PC-3 (cell line): ENCODE measurements at regions of chr20 and their contacts with region 1.

Region 1: DNA sequence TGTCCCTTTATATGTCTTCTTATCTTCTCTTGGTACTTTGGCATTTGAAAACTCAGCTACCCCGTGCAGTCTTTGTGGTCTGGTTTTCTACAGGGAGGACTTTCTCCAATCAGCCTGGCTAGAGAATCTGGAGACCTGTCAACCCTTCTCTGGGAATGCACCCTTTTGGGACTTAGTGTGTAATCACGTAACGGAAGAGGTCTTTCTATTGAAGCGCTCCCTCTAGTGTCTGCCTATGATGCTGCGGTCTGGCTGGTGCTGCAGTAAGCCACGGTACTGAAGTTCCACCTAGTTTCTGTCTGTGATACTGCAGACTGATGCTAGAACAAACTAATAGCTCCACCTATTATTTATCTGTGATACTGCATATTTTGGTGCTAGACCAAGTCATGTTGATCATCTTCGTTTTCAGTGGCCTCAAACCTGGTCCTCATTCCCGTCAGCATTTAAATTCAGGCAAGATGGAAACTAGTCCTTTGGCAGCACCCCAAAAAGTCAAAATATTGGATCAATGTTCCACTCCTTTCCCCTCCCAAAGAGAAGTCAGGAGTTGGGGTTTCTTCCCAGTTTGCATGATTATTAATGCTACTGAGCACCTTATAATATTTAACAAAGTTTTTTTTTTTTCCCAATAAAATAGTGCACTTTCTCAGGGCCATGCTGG is 12.5 kb upstream of the SIRPB2 start:
- DNase-seq: peak; percentile 98
- ATAC-seq: peak; percentile 85
- H3K4me3 ChIP-seq: no peak overlapping the region
- H3K27ac ChIP-seq: peak overlapping the region; percentile 85; the same call in 1 of the 2 replicates
- H3K4me1 ChIP-seq: peaks cover 50% of the 10 kb centered on the region
- H3K27me3 ChIP-seq: no peaks in the 10 kb centered on the region
- CTCF ChIP-seq: peak; percentile 100

Region 2: GRCh38 chr20:1212607-1213396 is 290.9 kb before region 1 on chr20:
- CTCF ChIA-PET with region 1: interaction called, 3 read pairs
- POLR2A ChIA-PET with region 1: no interaction called
- intact Hi-C with region 1: loop called (anchors 1 kb)
- DNase-seq: peak; percentile 87
- ATAC-seq: peak; percentile 95
- H3K4me3 ChIP-seq: no peak overlapping the region
- H3K27ac ChIP-seq: no peak overlapping the region
- H3K4me1 ChIP-seq: 0 out of 2 replicates have a peak, but pooled peaks cover 3% of the 10 kb centered on the region
- H3K27me3 ChIP-seq: no peaks in the 10 kb centered on the region
- CTCF ChIP-seq: peak; percentile 91

Region 3: GRCh38 chr20:1466211-1467081 is 37.2 kb before region 1 on chr20 and contains the start of gene NSFL1C:
- CTCF ChIA-PET with region 1: interaction called, 44 read pairs
- POLR2A ChIA-PET with region 1: no interaction called
- intact Hi-C with region 1: loop called (anchors 1 kb)
- DNase-seq: peak; percentile 99
- ATAC-seq: peak; percentile 77
- H3K4me3 ChIP-seq: peak within 1 kb of the TSS; percentile 77
- H3K27ac ChIP-seq: peak within 1 kb of the TSS; percentile 85
- H3K4me1 ChIP-seq: peaks cover 49% of the 10 kb centered on the region
- H3K27me3 ChIP-seq: no peaks in the 10 kb centered on the region
- CTCF ChIP-seq: peak; percentile 91
- total RNA-seq, gene NSFL1C: 170 and 217 TPM in 2 replicates

Region 4: DNA sequence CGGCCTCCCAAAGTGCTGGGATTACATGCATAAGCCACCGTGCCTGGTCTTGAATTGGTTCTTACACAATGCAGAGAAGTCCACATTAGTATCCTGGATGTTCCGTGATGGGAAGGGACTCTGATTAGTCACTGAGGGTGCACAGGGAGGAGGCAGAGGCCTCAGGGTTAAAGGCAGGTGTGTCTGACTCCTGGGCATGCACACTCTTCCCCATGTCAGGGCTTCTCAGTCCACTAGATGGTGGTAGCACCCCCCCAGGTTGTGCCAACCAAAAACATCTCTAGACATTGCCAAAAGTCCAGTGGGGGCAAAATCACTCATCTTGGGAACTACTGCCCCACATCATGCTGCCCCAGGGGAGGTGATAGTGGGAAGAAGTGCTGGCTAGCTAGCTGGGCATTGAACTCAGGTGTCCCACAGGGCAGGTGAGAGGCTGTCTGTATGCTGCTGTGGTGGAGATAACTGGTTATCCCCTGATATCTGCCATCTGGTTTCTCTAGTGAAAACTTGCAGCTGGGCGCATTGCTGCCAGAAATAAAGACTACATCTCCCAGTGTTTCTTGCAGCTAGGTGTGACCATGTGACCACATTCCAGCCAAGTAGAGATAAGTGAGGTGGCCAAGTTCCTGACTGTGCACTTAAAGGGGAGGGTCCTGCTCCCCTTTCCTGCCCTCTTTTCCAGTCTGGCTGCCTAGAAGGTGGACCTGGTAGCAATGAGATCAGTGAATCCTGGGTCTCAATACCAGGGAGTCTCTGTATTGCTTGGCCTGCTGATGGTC is 28.7 kb before region 1 on chr20:
- CTCF ChIA-PET with region 1: interaction called, 44 read pairs
- POLR2A ChIA-PET with region 1: no interaction called
- intact Hi-C with region 1: loop called (anchors 1 kb)
- DNase-seq: peak; percentile 90
- ATAC-seq: peak; percentile 43
- H3K4me3 ChIP-seq: no peak overlapping the region
- H3K27ac ChIP-seq: peak overlapping the region; percentile 8; the same call in 1 of the 2 replicates
- H3K4me1 ChIP-seq: peaks cover 60% of the 10 kb centered on the region
- H3K27me3 ChIP-seq: no peaks in the 10 kb centered on the region
- CTCF ChIP-seq: peak; percentile 82

Region 5: DNA sequence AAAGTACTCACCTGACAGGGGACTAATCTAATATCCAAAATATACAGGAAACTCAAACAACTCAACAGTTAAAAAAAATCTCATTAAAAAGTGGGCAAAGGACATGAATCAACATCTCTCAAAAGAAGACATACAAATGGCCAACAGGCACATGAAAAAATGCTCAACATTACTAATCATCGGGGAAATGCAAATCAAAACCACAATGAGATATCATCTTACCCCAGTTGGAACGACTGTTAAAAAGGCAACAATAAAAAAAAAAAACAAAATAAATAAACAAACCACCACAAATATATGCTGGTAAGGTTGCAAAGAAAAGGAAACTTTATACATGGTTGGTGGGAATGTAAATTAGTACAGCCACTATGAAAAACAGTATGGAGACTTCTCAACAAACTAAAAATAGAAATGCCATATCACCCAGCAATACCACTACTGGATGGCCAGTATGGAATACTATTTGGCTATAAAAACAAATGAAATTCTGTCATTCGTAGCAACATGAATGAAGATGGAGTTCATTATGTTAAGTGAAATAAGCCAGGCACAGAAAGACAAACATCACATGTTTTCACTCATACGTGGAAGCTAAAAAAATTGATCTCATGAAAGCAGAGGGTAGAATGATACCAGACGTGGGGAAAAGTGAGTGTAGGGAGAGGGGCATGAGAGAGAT is 19.1 kb before region 1 on chr20:
- CTCF ChIA-PET with region 1: interaction called, 7 read pairs
- POLR2A ChIA-PET with region 1: no interaction called
- intact Hi-C with region 1: loop called (anchors 1 kb)
- DNase-seq: peak; percentile 87
- ATAC-seq: peak; percentile 88
- H3K4me3 ChIP-seq: no peak overlapping the region
- H3K27ac ChIP-seq: peak overlapping the region; percentile 39
- H3K4me1 ChIP-seq: peaks cover 33% of the 10 kb centered on the region
- H3K27me3 ChIP-seq: no peaks in the 10 kb centered on the region
- CTCF ChIP-seq: no peak

Region 6: DNA sequence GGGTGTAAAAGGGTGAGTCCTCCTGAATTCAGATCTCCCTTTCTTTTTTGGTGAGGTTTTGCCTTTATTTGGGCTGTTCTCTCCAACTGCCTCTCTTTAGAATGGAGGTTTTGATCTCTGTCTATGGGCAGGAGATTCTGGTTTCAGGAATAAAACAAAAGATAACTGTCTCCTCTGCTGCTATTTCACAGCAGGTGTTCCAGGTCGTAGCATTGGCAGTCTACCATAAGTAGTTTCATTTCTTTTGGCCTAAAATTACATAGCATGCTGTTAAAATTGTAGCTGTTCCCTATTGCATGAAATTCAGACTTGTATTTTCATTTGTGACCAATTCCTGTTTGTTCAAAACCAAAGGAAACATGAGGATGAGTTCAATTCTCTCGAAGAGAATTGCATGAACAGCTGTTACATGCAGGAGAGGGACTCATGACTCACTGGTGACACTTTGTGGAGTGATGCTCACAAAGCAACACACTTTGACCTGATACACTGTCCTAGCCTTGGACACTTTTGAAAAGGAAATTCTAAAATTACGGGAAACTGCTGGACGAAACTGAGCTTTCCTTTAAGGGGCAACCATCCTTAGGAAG is 230.7 kb after region 1 on chr20:
- CTCF ChIA-PET with region 1: interaction called, 27 read pairs
- POLR2A ChIA-PET with region 1: no interaction called
- intact Hi-C with region 1: no loop called
- DNase-seq: peak; percentile 79
- ATAC-seq: peak; percentile 97
- H3K4me3 ChIP-seq: no peak overlapping the region
- H3K27ac ChIP-seq: peak overlapping the region; percentile 62
- H3K4me1 ChIP-seq: peaks cover 19% of the 10 kb centered on the region
- H3K27me3 ChIP-seq: no peaks in the 10 kb centered on the region
- CTCF ChIP-seq: peak; percentile 84

Region 7: GRCh38 chr20:1860446-1860845 is 356.8 kb after region 1 on chr20:
- CTCF ChIA-PET with region 1: no interaction called
- POLR2A ChIA-PET with region 1: no interaction called
- intact Hi-C with region 1: no loop called
- DNase-seq: peak; percentile 13
- ATAC-seq: no peak
- H3K4me3 ChIP-seq: no peak overlapping the region
- H3K27ac ChIP-seq: no peak overlapping the region
- H3K4me1 ChIP-seq: no peaks in the 10 kb centered on the region
- H3K27me3 ChIP-seq: peaks cover 7% of the 10 kb centered on the region; the same call in 1 of the 2 replicates
- CTCF ChIP-seq: no peak